Tibial artery (tissue), 4 donors: ENCODE measurements at regions of chr15 and their contacts with region 1.

Region 1: GRCh38 chr15:39747326-39747725 is 35.3 kb downstream of the FSIP1 start:
- DNase-seq: no peak
- H3K4me3 ChIP-seq: no peak overlapping the region
- H3K27ac ChIP-seq: no peak overlapping the region
- H3K4me1 ChIP-seq: no peaks in the 10 kb centered on the region
- H3K27me3 ChIP-seq: peaks cover 0 to 2% of the 10 kb centered on the region in 2 donors
- CTCF ChIP-seq: no peak

Region 2: DNA sequence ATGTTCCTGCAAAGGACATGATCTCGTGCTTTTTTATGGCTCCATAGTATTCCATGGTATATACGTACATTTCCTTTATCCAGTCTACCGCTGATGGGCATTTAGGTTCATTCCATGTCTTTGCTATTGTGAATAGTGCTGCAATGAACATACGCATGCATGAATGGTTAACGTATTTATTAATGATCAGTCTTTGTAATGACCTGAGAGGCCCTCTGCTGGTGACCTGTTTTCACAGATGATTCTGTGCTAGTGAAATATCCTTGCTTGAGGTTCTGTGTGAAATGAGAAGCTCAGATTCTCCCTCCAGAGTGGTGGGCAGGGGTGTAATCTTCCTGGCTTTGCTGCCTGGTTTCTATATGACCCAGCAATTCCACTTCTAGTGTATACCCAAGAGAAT is 1022.5 kb before region 1 on chr15:
- intact Hi-C with region 1: loop called (anchors 5 kb)
- DNase-seq: no peak
- H3K4me3 ChIP-seq: no peak overlapping the region
- H3K27ac ChIP-seq: no peak overlapping the region
- H3K4me1 ChIP-seq: peaks cover 0 to 7% (median 0%) of the 10 kb centered on the region in 4 donors
- H3K27me3 ChIP-seq: no peaks in the 10 kb centered on the region
- CTCF ChIP-seq: no peak

Region 3: GRCh38 chr15:39472621-39473297 is 274.6 kb before region 1 on chr15:
- intact Hi-C with region 1: no loop called
- DNase-seq: peak; percentile 74 to 89
- H3K4me3 ChIP-seq: no peak overlapping the region
- H3K27ac ChIP-seq: peak overlapping the region; percentile 67 to 73
- H3K4me1 ChIP-seq: peaks cover 0 to 40% (median 9%) of the 10 kb centered on the region in 4 donors
- H3K27me3 ChIP-seq: no peaks in the 10 kb centered on the region
- CTCF ChIP-seq: no peak

Region 4: DNA sequence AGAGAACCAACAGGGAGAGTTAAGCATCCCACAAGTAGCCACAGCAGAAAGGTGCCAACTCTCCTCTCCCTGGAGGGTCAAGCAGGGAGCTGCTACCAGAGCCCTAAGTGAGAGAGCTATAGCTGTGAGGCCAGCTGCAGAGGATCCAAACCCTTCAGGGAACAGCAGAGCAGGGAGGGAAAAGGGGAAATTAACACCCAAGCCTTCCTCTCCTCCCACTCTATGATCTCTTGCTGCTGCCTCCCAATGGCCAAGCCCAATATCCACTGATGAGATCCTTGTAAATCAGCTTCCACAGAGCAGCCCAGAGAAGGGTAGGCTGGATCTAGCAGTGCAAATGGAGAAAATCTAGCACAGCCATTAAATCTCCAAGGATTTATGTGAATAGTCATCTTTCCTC is 234.7 kb before region 1 on chr15:
- intact Hi-C with region 1: no loop called
- DNase-seq: no peak
- H3K4me3 ChIP-seq: no peak overlapping the region
- H3K27ac ChIP-seq: no peak overlapping the region
- H3K4me1 ChIP-seq: peaks cover 0 to 11% (median 10%) of the 10 kb centered on the region in 4 donors
- H3K27me3 ChIP-seq: no peaks in the 10 kb centered on the region
- CTCF ChIP-seq: no peak

Region 5: DNA sequence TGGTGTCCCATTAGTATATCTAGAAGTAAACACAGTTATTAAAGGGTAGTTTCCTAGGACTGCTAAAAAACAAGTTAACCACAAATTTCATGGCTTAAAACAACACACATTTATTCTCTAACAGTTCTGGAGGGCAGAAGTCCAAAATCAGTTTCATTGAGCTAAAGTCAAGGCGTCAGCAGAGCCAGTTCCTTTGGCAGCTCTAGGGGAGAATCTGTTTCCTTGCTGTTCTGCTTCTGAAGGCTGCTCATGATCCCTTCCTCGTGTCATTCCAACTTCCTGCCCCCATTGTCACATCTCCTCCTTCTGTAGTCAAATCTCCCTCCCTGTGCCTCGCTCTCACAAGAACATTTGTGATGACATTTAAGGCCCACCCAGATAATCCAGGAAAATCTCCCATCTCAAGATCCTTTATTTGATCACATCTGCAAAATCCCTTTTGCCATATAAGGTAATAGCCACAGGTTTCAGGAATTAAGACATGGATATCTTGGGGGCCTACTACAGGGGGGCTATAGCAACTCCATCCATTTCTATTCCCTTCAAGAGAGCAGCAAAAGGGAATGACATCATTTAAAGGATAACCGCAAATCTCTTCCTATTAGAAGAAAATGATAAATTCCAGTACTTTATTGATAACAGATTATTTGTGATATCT is 122.7 kb after region 1 on chr15:
- intact Hi-C with region 1: no loop called
- DNase-seq: peak in 1 of 2 donors; percentile 29
- H3K4me3 ChIP-seq: no peak overlapping the region
- H3K27ac ChIP-seq: no peak overlapping the region
- H3K4me1 ChIP-seq: peaks cover 0 to 25% (median 4%) of the 10 kb centered on the region in 4 donors
- H3K27me3 ChIP-seq: no peaks in the 10 kb centered on the region
- CTCF ChIP-seq: no peak